ENCODE measurements at regions of chr2 and their contacts with region 1.

Region 1: DNA sequence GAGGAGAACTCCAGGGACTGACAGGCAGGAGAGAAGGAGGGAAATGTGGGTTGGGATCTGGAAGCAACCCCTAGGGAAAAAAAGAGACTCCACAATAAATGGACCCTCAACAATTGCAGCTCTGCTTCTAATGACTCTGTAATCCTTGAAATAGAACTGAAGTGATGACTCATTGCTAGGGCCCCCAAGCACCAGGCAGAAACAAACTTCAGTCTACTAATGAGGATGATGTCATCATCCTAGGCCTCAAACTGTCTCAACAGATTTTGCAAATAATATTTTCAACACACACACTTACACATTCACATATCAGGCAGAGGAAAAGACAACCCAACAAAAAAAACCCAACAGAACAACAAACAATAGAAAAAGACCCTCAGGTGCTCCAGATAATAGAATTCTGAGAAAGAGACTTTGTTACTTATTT is 143.3 kb downstream of the HDAC4 start:
- DNase-seq: no peak
- ATAC-seq: peak; percentile 41
- H3K4me3 ChIP-seq: no peak overlapping the region
- H3K27ac ChIP-seq: no peak overlapping the region
- H3K4me1 ChIP-seq: peaks cover 35% of the 10 kb centered on the region
- H3K27me3 ChIP-seq: peaks cover 0 to 7% of the 10 kb centered on the region in 2 experiments; a peak in 2 of 4 replicates
- CTCF ChIP-seq: no peak
- EP300 ChIP-seq: no peak
- POLR2A ChIP-seq: no peak
- RAD21 ChIP-seq: no peak

Region 2: GRCh38 chr2:239143858-239144718 is 113.4 kb before region 1 on chr2:
- CTCF ChIA-PET with region 1: interaction called, 6 read pairs
- POLR2A ChIA-PET with region 1: no interaction called
- RAD21 ChIA-PET with region 1: interaction called, 3 read pairs
- SMC1A ChIA-PET with region 1: no interaction called
- in situ Hi-C with region 1: no loop called
- intact Hi-C with region 1: loop called (anchors 10 kb)
- DNase-seq: no peak
- ATAC-seq: peak; percentile 68
- H3K4me3 ChIP-seq: no peak overlapping the region
- H3K27ac ChIP-seq: no peak overlapping the region
- H3K4me1 ChIP-seq: peaks cover 10% of the 10 kb centered on the region
- H3K27me3 ChIP-seq: no peaks in the 10 kb centered on the region
- CTCF ChIP-seq: peak; percentile 45 to 77 (median 64); a peak in 5 of 6 replicates
- EP300 ChIP-seq: no peak
- POLR2A ChIP-seq: no peak
- RAD21 ChIP-seq: peak; percentile 44; the same call in 1 of the 2 replicates

Measured in GM12878 (cell line).